ENCODE measurements at regions of chr7 and their contacts with region 1.

Region 1: GRCh38 chr7:141528399-141528798 is 22.8 kb upstream of the AGK start:
- DNase-seq: no peak
- H3K27ac ChIP-seq: no peak overlapping the region
- CTCF ChIP-seq: no peak

Region 2: DNA sequence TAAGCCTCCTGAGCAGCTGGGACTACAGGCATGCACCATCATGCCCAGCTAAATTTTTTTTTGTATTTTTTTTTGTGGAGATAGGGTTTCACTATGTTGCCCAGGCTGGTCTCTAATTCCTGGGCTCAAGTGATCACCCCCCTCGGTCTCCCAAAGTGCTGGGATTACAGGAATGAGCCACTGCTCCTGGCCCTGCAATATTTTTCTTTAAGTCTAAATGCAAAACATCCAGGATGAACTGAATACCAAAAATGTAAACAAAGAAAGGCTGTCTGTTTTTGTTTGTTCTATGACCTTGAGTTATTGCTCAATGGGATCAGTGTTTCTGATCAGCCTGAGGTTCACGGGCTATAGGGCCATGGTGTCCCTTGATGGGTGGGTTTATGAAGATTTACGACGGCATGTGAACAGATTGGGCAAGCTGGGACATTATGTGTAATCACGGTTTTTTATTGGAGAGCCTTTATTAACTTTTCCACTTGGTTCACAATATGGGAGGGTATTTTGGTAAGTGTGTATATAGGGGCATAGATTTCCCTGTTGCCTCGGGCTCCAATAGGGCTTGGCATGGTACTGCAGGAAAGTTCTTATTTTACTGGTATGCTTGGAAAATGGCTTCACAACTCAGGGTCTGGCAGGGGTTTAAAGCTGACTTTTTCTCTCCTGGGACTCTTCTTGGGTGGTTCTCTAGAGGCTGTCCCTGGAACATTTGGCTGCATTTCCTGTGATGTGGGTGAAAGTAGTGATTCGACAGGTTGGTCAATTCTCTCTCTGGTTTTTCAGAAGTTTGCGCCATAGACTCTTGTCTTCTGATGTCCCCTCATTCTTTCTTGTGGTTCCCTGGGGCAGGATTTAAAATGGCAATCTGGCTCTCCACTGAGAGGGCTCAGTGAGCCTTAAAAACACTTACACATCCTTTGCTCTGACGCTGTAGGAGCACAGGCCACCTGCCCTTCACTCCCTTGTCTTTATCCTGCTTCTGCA is 555.2 kb before region 1 on chr7:
- CTCF ChIA-PET with region 1: interaction called, 10 read pairs
- POLR2A ChIA-PET with region 1: no interaction called
- DNase-seq: no peak
- H3K27ac ChIP-seq: no peak overlapping the region
- CTCF ChIP-seq: no peak

Measured in RWPE1 (cell line).